ENCODE measurements at regions of chr9 and their contacts with region 1.

Region 1: GRCh38 chr9:35847792-35848572 is 19.0 kb downstream of the TMEM8B start:
- DNase-seq: peak; percentile 95
- H3K4me3 ChIP-seq: no peak overlapping the region
- H3K27ac ChIP-seq: no peak overlapping the region
- H3K4me1 ChIP-seq: peaks cover 26% of the 10 kb centered on the region
- H3K27me3 ChIP-seq: no peaks in the 10 kb centered on the region
- CTCF ChIP-seq: no peak

Region 2: GRCh38 chr9:35790385-35791296 is 57.3 kb before region 1 on chr9:
- CTCF ChIA-PET with region 1: no interaction called
- dilution Hi-C with region 1: no loop called
- in situ Hi-C with region 1: no loop called
- intact Hi-C with region 1: no loop called
- DNase-seq: peak; percentile 60
- H3K4me3 ChIP-seq: no peak overlapping the region
- H3K27ac ChIP-seq: no peak overlapping the region
- H3K4me1 ChIP-seq: peaks cover 11% of the 10 kb centered on the region
- H3K27me3 ChIP-seq: no peaks in the 10 kb centered on the region
- CTCF ChIP-seq: peak; percentile 83

Region 3: GRCh38 chr9:35835216-35835632 is 12.8 kb before region 1 on chr9:
- CTCF ChIA-PET with region 1: no interaction called
- dilution Hi-C with region 1: no loop called
- in situ Hi-C with region 1: no loop called
- intact Hi-C with region 1: loop called (anchors 1 kb)
- DNase-seq: no peak
- H3K4me3 ChIP-seq: no peak overlapping the region
- H3K27ac ChIP-seq: no peak overlapping the region
- H3K4me1 ChIP-seq: no peaks in the 10 kb centered on the region
- H3K27me3 ChIP-seq: no peaks in the 10 kb centered on the region
- CTCF ChIP-seq: peak; percentile 22 to 50

Measured in mammary epithelial cell (primary cell).